CD14-positive monocyte (primary cell): ENCODE measurements at regions of chr11 and their contacts with region 1.

Region 1: GRCh38 chr11:118198370-118198769 is 21.9 kb upstream of the SCN2B start:
- DNase-seq: peak in 2 of 3 donors; percentile 57 to 67
- H3K4me3 ChIP-seq: no peak overlapping the region
- H3K4me3 Mint-ChIP-seq: no peak overlapping the region
- H3K27ac ChIP-seq: peak overlapping the region in 1 of 2 donors; percentile 5
- H3K27ac Mint-ChIP-seq: peak overlapping the region in 5 of 7 donors; percentile 12 to 61 (median 33)
- H3K4me1 ChIP-seq: peaks cover 8 to 12% of the 10 kb centered on the region in 2 donors
- H3K4me1 Mint-ChIP-seq: peaks cover 18% of the 10 kb centered on the region
- H3K27me3 ChIP-seq: no peaks in the 10 kb centered on the region
- H3K27me3 Mint-ChIP-seq: no peaks in the 10 kb centered on the region
- CTCF ChIP-seq: peak; percentile 93

Region 2: DNA sequence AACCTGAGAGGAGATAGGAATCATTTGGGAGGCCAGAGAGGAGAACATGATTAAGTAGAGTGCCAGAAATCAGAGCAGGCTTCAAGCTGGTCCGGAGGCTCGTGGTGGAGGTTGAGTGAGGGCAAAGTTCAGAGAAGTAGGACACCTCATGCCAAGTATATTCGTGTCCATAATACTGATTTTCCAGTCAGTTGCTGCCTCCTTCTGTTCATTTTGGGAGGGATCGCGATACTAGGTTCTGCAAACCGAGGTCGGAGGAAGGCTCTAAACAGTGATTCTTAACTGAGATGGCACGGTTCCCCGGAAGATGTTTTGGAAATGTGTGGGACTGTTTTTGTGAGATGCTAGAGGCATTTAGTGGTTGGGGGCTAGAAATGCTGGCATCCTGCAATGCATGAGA is 92.6 kb after region 1 on chr11:
- intact Hi-C with region 1: loop called (anchors 2 to 5 kb)
- DNase-seq: peak; percentile 52 to 71 (median 63)
- H3K4me3 ChIP-seq: peak overlapping the region; percentile 4 to 70 (median 48)
- H3K4me3 Mint-ChIP-seq: peak overlapping the region; percentile 0 to 80
- H3K27ac ChIP-seq: peak overlapping the region; percentile 1 to 90
- H3K27ac Mint-ChIP-seq: peak overlapping the region; percentile 86 to 95 (median 93)
- H3K4me1 ChIP-seq: peaks cover 14 to 20% of the 10 kb centered on the region in 2 donors
- H3K4me1 Mint-ChIP-seq: peaks cover 24% of the 10 kb centered on the region
- H3K27me3 ChIP-seq: no peaks in the 10 kb centered on the region
- H3K27me3 Mint-ChIP-seq: peaks cover 0 to 2% (median 2%) of the 10 kb centered on the region in 3 donors
- CTCF ChIP-seq: peak; percentile 60

Region 3: DNA sequence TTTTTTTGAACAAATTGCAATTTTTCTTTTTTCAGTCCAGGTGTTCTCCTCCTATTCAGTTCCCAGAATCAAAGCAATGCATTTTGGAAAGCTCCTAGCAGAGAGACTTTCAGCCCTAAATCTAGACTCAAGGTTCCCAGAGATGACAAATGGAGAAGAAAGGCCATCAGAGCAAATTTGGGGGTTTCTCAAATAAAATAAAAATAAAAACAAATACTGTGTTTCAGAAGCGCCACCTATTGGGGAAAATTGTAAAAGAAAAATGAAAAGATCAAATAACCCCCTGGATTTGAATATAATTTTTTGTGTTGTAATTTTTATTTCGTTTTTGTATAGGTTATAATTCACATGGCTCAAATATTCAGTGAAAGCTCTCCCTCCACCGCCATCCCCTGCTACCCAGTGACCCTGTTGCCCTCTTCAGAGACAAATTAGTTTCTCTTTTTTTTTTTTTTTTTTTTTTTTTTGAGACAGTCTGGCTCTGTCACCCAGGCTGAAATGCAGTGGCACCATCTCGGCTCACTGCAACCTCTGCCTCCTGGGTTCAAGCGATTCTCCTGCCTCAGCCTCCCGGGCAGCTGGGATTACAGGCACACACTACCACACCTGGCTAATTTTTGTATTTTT is 154.8 kb after region 1 on chr11:
- intact Hi-C with region 1: loop called (anchors 2 to 5 kb)
- DNase-seq: peak; percentile 6 to 29 (median 19)
- H3K4me3 ChIP-seq: no peak overlapping the region
- H3K4me3 Mint-ChIP-seq: no peak overlapping the region
- H3K27ac ChIP-seq: no peak overlapping the region
- H3K27ac Mint-ChIP-seq: no peak overlapping the region
- H3K4me1 ChIP-seq: peaks cover 3 to 5% of the 10 kb centered on the region in 2 donors
- H3K4me1 Mint-ChIP-seq: peaks cover 8% of the 10 kb centered on the region
- H3K27me3 ChIP-seq: peaks cover 2 to 6% of the 10 kb centered on the region in 2 donors
- H3K27me3 Mint-ChIP-seq: peaks cover 4 to 10% (median 9%) of the 10 kb centered on the region in 3 donors
- CTCF ChIP-seq: peak; percentile 80

Region 4: GRCh38 chr11:118488480-118489109 is 290.2 kb after region 1 on chr11:
- intact Hi-C with region 1: loop called in 1 of 2 experiments (anchors 10 kb)
- DNase-seq: peak; percentile 58 to 67 (median 61)
- H3K4me3 ChIP-seq: no peak overlapping the region
- H3K4me3 Mint-ChIP-seq: no peak overlapping the region
- H3K27ac ChIP-seq: no peak overlapping the region
- H3K27ac Mint-ChIP-seq: peak overlapping the region in 1 of 7 donors; percentile 6
- H3K4me1 ChIP-seq: no peaks in the 10 kb centered on the region
- H3K4me1 Mint-ChIP-seq: no peaks in the 10 kb centered on the region
- H3K27me3 ChIP-seq: no peaks in the 10 kb centered on the region
- H3K27me3 Mint-ChIP-seq: no peaks in the 10 kb centered on the region
- CTCF ChIP-seq: peak; percentile 82

Region 5: DNA sequence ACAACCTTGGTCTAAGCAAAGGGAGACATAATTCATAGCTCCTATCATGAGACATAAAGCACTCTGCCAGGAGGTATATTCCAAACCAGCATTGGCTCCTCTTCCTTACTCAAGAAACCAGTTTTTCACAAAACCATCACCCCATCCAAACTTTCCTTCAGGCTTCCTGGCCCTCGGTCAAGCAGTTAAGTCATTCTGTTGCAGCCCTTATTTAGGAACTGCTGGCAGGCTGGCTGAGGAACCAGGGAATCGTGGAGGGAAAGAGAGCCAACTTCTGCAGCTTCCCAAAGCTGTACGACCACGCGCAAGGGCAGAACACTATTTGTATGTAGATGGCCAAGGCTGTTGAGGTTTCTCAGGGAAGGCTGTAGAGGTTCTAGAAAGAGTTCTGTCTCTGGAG is 366.7 kb after region 1 on chr11:
- intact Hi-C with region 1: no loop called
- DNase-seq: no peak
- H3K4me3 ChIP-seq: no peak overlapping the region
- H3K4me3 Mint-ChIP-seq: peak overlapping the region; percentile 48 to 60
- H3K27ac ChIP-seq: no peak overlapping the region
- H3K27ac Mint-ChIP-seq: peak overlapping the region in 3 of 7 donors; percentile 24 to 88 (median 63)
- H3K4me1 ChIP-seq: peaks cover 4 to 6% of the 10 kb centered on the region in 2 donors
- H3K4me1 Mint-ChIP-seq: peaks cover 8% of the 10 kb centered on the region
- H3K27me3 ChIP-seq: no peaks in the 10 kb centered on the region
- H3K27me3 Mint-ChIP-seq: peaks cover 0 to 2% (median 2%) of the 10 kb centered on the region in 3 donors
- CTCF ChIP-seq: no peak